ENCODE measurements at regions of chr6 and their contacts with region 1.

Region 1: DNA sequence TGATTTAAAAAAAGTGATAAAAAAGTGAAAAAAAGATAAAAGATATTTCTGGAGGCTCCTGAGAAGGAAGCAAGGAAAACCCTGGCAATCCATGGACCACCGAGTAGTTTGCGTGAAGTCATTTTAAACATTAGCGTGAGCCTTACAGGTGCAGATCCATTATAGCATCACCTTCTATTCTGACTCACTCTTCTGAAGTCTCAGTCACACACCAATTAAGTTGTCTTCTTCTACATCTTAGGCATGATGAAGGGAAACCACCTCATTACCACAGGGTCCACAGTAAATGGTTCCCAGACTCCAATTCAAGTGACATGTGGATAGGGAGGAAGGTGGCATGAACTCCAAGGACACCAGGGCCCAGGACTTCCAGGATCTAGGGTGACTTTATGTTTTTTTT is 99.1 kb downstream of the GJA10 start:
- DNase-seq: no peak
- ATAC-seq: no peak
- H3K4me3 ChIP-seq: no peak overlapping the region
- H3K4me3 Mint-ChIP-seq: no peak overlapping the region
- H3K27ac ChIP-seq: no peak overlapping the region
- H3K27ac Mint-ChIP-seq: peak overlapping the region in 4 of 9 donors; percentile 14 to 68 (median 45)
- H3K4me1 ChIP-seq: peaks cover 0 to 14% of the 10 kb centered on the region in 2 donors
- H3K4me1 Mint-ChIP-seq: peaks cover 21 to 98% (median 87%) of the 10 kb centered on the region in 7 donors
- H3K27me3 ChIP-seq: no peaks in the 10 kb centered on the region
- H3K27me3 Mint-ChIP-seq: no peaks in the 10 kb centered on the region

Region 2: DNA sequence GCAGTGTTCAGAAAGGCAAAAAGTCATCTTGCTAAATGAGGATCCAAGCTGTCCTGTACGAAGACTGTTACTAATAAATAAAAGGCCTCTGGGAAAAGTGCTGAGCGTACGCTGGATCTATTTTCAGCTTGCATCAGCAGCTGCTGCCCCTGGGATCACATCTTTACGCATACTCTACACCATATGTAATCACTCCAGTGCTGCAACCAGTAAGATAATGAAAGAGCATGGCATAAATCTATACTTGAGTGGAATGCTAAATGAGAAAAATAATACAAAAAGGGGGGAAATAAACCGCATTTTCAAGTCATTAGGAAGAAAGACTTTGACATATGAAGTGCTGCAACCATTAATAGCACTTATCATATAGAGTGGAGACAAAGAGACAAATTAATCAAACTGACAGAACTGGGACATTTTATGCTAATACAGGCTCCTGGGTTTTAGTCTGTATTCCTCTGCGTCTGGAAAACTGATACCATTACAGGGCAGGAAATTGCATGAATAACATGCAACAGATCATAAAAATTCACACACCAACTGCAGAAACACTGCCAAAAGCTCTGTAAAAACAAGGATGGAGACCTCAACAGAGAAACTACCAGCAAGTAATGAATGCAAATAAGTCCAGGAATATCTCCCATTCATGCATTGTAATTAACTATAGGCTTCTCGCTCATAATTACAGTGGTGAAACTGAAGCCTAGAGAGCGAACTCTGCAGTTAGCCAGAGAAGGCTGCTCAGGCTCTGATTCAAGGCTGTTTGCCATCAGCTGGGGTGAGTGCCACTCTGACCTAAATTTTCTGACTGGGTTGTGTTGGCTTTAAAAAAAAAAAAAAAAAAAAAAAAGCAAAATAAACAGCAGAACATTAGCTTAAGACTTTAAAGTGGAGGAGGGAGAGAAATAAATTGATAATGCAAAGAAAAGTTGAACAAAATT is 15.3 kb before region 1 on chr6:
- CTCF ChIA-PET with region 1: interaction called, 4 read pairs
- POLR2A ChIA-PET with region 1: no interaction called
- intact Hi-C with region 1: loop called in 1 of 2 experiments (anchors 2 kb)
- DNase-seq: no peak
- ATAC-seq: no peak
- H3K4me3 ChIP-seq: no peak overlapping the region
- H3K4me3 Mint-ChIP-seq: no peak overlapping the region
- H3K27ac ChIP-seq: no peak overlapping the region
- H3K27ac Mint-ChIP-seq: no peak overlapping the region
- H3K4me1 ChIP-seq: peaks cover 0 to 11% of the 10 kb centered on the region in 2 donors
- H3K4me1 Mint-ChIP-seq: peaks cover 9 to 63% (median 43%) of the 10 kb centered on the region in 7 donors
- H3K27me3 ChIP-seq: no peaks in the 10 kb centered on the region
- H3K27me3 Mint-ChIP-seq: no peaks in the 10 kb centered on the region

Measured in naive thymus-derived CD4-positive, alpha-beta T cell (primary cell).